ENCODE measurements at regions of chr4 and their contacts with region 1.

Region 1: DNA sequence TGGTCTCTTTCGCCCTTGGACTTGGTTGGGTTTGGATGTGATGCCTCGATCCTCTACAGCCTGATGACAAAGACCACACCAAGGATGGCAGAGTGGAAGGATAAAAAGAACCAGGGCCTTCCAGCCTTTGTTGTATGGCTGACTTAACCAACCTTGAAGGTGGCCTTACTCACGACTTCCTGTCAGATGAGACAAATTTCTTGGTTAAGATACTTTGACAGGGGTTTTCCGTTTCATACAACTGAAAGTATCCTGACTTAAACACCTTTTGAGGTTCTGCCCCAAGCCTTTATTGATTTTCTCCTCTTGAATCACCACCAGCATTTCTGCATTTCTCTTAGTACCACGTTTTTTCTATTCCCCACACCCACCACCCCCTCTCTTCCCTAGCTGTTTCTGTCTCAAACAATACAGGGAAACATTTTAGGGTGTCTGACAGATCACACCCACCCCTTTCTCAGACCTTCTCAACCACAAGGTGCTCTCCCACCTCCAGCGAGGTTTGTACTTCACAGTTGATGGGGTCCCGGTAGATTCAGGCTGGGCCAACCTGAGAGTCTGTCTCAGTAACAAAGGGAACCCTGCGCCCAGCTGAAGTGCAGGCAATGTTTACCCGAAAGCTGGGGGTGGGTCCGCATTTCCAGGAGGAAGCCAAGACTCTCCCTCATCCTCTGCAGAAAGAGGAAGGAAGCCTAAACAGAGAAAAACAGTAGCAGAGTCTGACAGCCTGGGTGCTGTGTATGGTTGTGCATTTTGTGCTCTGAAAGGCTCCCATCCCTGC is 5.0 kb upstream of the TSPAN5 start:
- DNase-seq: no peak
- ATAC-seq: no peak
- H3K4me3 ChIP-seq: no peak overlapping the region
- H3K27ac ChIP-seq: peak overlapping the region in 1 of 2 donors; percentile 18
- H3K4me1 ChIP-seq: peaks cover 0 to 16% of the 10 kb centered on the region in 2 donors
- H3K27me3 ChIP-seq: peaks cover 0 to 15% of the 10 kb centered on the region in 2 donors
- CTCF ChIP-seq: no peak

Region 2: DNA sequence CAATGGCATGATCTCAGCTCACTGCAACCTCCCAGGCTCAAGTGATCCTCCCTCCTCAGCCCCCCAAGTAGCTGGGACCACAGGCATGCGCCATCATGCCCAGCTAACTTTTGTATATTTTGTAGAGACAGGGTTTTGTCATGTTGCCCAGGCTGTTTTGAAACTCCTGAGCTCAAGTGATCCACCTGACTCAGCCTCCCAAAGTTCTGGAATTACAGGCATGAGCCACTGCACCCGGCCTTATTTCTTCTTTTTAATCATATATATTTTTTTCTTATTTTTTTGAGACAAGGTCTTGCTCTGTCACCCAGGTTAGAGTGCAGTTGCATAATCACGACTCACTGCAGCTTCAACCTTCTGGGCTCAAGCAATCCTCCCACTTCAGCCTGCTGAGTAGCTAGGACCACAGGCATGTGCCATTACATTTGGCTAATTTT is 189.0 kb before region 1 on chr4:
- intact Hi-C with region 1: loop called in 1 of 2 experiments (anchors 10 kb)
- DNase-seq: no peak
- ATAC-seq: peak; percentile 60
- H3K4me3 ChIP-seq: no peak overlapping the region
- H3K27ac ChIP-seq: no peak overlapping the region
- H3K4me1 ChIP-seq: no peaks in the 10 kb centered on the region
- H3K27me3 ChIP-seq: no peaks in the 10 kb centered on the region
- CTCF ChIP-seq: no peak